ENCODE measurements at regions of chr11 and their contacts with region 1.

Region 1: GRCh38 chr11:95688580-95689189 is 100.9 kb downstream of the FAM76B start:
- DNase-seq: peak; percentile 34
- H3K4me3 Mint-ChIP-seq: no peak overlapping the region
- H3K27ac Mint-ChIP-seq: no peak overlapping the region
- H3K4me1 Mint-ChIP-seq: peaks cover 26% of the 10 kb centered on the region
- H3K27me3 Mint-ChIP-seq: no peaks in the 10 kb centered on the region

Region 2: GRCh38 chr11:95641495-95641894 is 47.2 kb before region 1 on chr11:
- intact Hi-C with region 1: loop called (anchors 2 kb)
- DNase-seq: peak; percentile 47
- H3K4me3 Mint-ChIP-seq: no peak overlapping the region
- H3K27ac Mint-ChIP-seq: peak overlapping the region; percentile 70
- H3K4me1 Mint-ChIP-seq: peaks cover 24% of the 10 kb centered on the region
- H3K27me3 Mint-ChIP-seq: no peaks in the 10 kb centered on the region

Region 3: DNA sequence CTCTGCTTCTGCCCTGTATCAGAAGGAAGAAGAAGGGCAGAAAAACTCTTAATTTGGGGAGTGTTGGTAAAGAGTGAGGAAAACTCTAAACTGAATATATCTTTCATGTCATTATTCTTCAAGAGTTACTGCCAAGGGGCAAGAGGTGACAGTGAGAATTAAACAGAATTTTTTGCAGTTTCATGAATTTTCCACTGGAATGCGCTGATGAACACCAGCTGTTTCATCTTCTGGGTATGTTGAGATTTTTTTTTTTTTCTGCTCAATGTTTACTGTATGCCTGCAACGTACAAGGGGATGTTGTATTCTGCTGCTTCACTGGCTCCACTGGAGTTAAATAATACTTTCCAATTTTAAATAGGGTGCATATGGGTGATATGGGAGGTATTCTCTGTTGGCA is 16.9 kb before region 1 on chr11:
- intact Hi-C with region 1: loop called (anchors 1 kb)
- DNase-seq: no peak
- H3K4me3 Mint-ChIP-seq: no peak overlapping the region
- H3K27ac Mint-ChIP-seq: no peak overlapping the region
- H3K4me1 Mint-ChIP-seq: peaks cover 27% of the 10 kb centered on the region
- H3K27me3 Mint-ChIP-seq: no peaks in the 10 kb centered on the region